K562 (cell line): ENCODE measurements at regions of chr4 and their contacts with region 1.

Region 1: GRCh38 chr4:165207431-165208220 is at the start of gene KLHL2:
- DNase-seq: peak; percentile 82 to 86 (median 84)
- ATAC-seq: peak; percentile 88
- H3K4me3 ChIP-seq: peak within 1 kb of the TSS; percentile 73
- H3K27ac ChIP-seq: peak within 1 kb of the TSS; percentile 53; the same call in 2 of the 3 replicates
- H3K4me1 ChIP-seq: peaks cover 17 to 19% of the 10 kb centered on the region in 2 experiments
- H3K27me3 ChIP-seq: peaks cover 0 to 10% of the 10 kb centered on the region in 2 experiments; a peak in 3 of 5 replicates
- CTCF ChIP-seq: no peak
- EP300 ChIP-seq: no peak
- POLR2A ChIP-seq: no peak
- RAD21 ChIP-seq: no peak
- polyA plus RNA-seq, gene KLHL2: 2.5 to 3.5 TPM

Region 2: GRCh38 chr4:165184220-165184619 is 23.4 kb before region 1 on chr4:
- CTCF ChIA-PET with region 1: no interaction called
- POLR2A ChIA-PET with region 1: no interaction called
- in situ Hi-C with region 1: no loop called
- intact Hi-C with region 1: no loop called
- DNase-seq: no peak
- ATAC-seq: no peak
- H3K4me3 ChIP-seq: no peak overlapping the region
- H3K27ac ChIP-seq: no peak overlapping the region
- H3K4me1 ChIP-seq: no peaks in the 10 kb centered on the region
- H3K27me3 ChIP-seq: no peaks in the 10 kb centered on the region; a peak in 2 of 5 replicates
- CTCF ChIP-seq: no peak
- EP300 ChIP-seq: no peak
- POLR2A ChIP-seq: no peak
- RAD21 ChIP-seq: no peak

Region 3: DNA sequence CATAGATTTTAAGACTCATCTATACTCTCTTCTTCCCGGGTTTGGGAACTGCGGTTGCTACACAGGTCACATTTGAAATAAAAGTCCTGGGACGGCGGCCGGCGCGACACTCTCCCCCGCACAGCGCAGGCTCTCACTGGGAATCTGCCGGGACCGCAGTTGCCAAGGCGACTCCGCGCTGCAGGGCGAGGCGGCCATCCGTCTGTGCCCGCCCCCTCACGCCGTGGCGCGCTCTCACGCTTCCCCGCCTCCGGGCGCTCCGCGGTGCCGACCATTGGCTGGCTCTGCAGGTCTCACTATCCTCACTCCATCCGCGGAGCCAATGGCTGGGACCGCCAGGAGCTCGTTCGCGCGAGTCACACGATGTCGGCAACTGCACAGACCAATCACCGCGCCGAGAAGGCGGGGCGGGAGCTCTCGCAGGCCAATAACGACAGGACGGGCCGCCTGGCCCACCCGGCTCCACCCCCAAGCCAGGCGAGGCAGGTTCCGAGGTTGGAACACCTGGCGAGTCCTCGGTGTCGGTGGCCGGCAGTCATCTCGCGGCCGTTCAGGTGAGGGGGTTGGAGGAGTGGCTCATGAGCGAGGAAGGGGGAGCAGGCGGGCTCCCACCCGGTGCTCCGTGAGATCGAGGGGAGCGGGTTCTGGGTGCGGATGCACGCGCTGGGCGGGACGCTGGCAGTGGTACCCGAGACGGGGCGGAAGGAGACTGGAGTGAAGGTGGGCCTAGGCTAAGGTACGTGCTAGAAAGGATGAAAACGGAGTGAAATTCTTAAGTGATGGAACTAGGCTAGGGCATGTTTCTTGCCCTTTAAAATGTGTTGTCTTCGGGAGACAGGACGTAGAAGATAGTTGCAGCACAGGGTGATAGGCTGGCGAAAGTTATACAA is 119.8 kb after region 1 on chr4 and contains the start of gene MSMO1:
- CTCF ChIA-PET with region 1: no interaction called
- POLR2A ChIA-PET with region 1: interaction called, 3 read pairs
- in situ Hi-C with region 1: loop called (anchors 5 kb)
- intact Hi-C with region 1: loop called (anchors 2 kb)
- DNase-seq: peak; percentile 93 to 98 (median 94)
- ATAC-seq: peak; percentile 96
- H3K4me3 ChIP-seq: peak within 1 kb of the TSS; percentile 84
- H3K27ac ChIP-seq: peak within 1 kb of the TSS; percentile 80
- H3K4me1 ChIP-seq: peaks cover 9 to 23% of the 10 kb centered on the region in 2 experiments; a peak in 4 of 5 replicates
- H3K27me3 ChIP-seq: no peaks in the 10 kb centered on the region
- CTCF ChIP-seq: no peak; a peak in 1 of 6 replicates
- EP300 ChIP-seq: peak; percentile 52; the same call in 1 of the 2 replicates
- POLR2A ChIP-seq: peak; percentile 81
- RAD21 ChIP-seq: no peak
- polyA plus RNA-seq, gene MSMO1: 79.5 to 86.8 TPM

Region 4: DNA sequence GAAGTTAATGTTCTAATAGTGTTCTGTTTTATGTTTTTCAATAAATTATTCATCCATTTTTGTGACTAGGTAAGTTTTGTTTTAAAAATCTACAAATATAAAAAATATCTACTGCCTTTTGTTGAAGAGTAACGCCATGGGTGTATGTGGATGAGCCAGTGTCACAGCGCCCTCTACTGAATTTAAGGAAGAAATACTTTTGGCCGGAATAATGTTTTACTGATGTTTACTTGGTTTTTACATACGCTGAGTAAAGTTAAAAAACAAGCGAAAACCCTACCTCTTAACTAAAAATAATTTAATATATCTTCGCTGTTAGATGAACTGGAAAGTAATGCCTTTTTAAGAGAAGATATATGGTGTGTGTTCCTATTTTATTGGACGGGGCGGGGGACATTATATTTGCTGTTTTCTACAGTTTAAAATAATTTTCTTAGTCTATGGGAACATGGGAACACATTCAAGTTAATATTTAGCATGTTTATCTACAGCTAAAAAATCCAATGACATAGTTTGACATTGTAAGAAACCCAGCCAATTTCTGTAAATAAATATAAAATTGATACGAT is 257.3 kb after region 1 on chr4:
- CTCF ChIA-PET with region 1: no interaction called
- POLR2A ChIA-PET with region 1: no interaction called
- in situ Hi-C with region 1: no loop called
- intact Hi-C with region 1: loop called (anchors 10 kb)
- DNase-seq: peak; percentile 60 to 66 (median 62)
- ATAC-seq: peak; percentile 75
- H3K4me3 ChIP-seq: no peak overlapping the region
- H3K27ac ChIP-seq: no peak overlapping the region
- H3K4me1 ChIP-seq: peaks cover 0 to 4% of the 10 kb centered on the region in 2 experiments; a peak in 2 of 5 replicates
- H3K27me3 ChIP-seq: no peaks in the 10 kb centered on the region
- CTCF ChIP-seq: peak; percentile 66 to 90 (median 70)
- EP300 ChIP-seq: no peak
- POLR2A ChIP-seq: no peak
- RAD21 ChIP-seq: peak; percentile 85 to 93